Mammary epithelial cell (primary cell): ENCODE measurements at regions of chr17 and their contacts with region 1.

Region 1: DNA sequence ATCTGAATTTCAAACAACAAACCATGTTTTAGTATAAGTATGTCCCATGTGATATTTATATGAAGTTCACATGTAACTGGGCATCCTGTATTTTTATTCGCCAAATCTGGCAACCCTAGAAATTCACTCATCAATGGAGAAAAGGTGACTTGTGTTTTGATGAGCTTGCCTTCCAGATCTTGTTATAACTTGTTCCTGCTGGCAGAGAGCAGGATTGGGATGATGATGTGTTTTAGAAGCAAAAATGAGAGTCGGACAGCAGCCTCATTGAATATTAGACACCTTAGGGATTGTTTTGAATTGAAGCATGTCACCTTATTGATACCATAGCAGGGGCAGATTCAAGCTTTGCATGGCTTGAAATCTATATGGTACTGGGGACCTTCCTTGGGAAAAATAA is 85.4 kb upstream of the MED13 start:
- DNase-seq: peak; percentile 70
- H3K4me3 ChIP-seq: no peak overlapping the region
- H3K27ac ChIP-seq: no peak overlapping the region
- H3K4me1 ChIP-seq: peaks cover 5% of the 10 kb centered on the region
- H3K27me3 ChIP-seq: no peaks in the 10 kb centered on the region
- CTCF ChIP-seq: no peak

Region 2: DNA sequence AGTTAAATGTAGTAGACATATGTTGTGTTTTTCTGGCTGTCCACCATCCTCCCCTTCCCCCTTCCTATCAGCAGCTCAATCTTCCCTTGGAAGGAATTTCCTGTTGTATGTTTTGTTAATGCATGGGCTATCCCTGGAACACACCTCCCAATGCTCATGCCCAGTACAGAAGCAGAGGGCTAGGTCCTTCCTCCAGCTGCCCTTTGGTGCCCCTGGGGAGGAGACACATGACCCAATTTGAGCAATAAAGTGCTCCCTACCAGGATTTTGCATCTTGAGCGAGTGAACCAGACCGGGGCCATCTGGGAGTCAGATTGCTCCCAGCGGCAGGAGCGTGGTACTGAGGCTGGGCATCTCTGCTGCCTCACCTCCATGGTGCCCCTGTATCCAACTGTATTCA is 56.1 kb after region 1 on chr17:
- CTCF ChIA-PET with region 1: no interaction called
- dilution Hi-C with region 1: loop called (anchors 5 kb)
- in situ Hi-C with region 1: no loop called
- intact Hi-C with region 1: no loop called
- DNase-seq: no peak
- H3K4me3 ChIP-seq: no peak overlapping the region
- H3K27ac ChIP-seq: no peak overlapping the region
- H3K4me1 ChIP-seq: no peaks in the 10 kb centered on the region
- H3K27me3 ChIP-seq: no peaks in the 10 kb centered on the region
- CTCF ChIP-seq: no peak